IMR-90 (cell line): ENCODE measurements at regions of chr4 and their contacts with region 1.

Region 1: GRCh38 chr4:16289897-16290554 is 63.8 kb upstream of the TAPT1 start:
- DNase-seq: peak; percentile 46
- ATAC-seq: peak; percentile 85
- H3K4me3 ChIP-seq: no peak overlapping the region
- H3K27ac ChIP-seq: no peak overlapping the region
- H3K4me1 ChIP-seq: no peaks in the 10 kb centered on the region
- H3K27me3 ChIP-seq: peaks cover 10% of the 10 kb centered on the region
- CTCF ChIP-seq: peak; percentile 74
- POLR2A ChIP-seq: no peak
- RAD21 ChIP-seq: peak; percentile 74

Region 2: DNA sequence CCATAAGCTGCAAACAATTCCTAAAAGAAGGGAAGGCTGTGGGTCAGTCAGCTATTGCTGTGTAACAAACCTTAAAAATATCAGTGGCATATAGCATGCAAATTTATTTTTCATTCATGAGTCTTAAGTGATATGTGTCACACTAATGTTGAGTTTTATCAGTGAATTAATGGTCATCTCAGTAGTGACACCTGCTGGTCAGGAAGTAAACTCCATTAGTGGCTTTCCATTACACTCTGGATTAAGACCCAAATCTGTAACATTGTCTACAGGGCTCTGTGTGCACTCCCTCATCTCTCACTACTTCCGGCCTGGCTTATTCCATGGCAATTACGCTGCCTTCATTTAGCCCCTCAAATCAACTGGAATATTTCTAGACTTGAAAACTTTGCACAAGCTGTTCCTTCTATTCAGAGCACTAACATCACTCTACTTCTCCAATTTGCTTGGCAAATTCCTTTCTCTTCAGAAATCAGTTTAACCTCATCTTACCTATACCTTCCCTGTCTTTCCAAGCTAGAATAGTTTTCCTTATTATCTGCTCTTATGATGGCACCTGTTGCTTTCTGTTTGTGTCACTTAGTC is 153.6 kb after region 1 on chr4:
- CTCF ChIA-PET with region 1: interaction called, 3 read pairs
- POLR2A ChIA-PET with region 1: no interaction called
- dilution Hi-C with region 1: no loop called
- in situ Hi-C with region 1: no loop called
- intact Hi-C with region 1: loop called (anchors 1 kb)
- DNase-seq: peak; percentile 52
- ATAC-seq: peak; percentile 88
- H3K4me3 ChIP-seq: no peak overlapping the region
- H3K27ac ChIP-seq: no peak overlapping the region
- H3K4me1 ChIP-seq: peaks cover under 1% of the 10 kb centered on the region; the same call in 1 of the 2 replicates
- H3K27me3 ChIP-seq: peaks cover 6% of the 10 kb centered on the region
- CTCF ChIP-seq: peak; percentile 63
- POLR2A ChIP-seq: no peak
- RAD21 ChIP-seq: peak; percentile 48

Region 3: DNA sequence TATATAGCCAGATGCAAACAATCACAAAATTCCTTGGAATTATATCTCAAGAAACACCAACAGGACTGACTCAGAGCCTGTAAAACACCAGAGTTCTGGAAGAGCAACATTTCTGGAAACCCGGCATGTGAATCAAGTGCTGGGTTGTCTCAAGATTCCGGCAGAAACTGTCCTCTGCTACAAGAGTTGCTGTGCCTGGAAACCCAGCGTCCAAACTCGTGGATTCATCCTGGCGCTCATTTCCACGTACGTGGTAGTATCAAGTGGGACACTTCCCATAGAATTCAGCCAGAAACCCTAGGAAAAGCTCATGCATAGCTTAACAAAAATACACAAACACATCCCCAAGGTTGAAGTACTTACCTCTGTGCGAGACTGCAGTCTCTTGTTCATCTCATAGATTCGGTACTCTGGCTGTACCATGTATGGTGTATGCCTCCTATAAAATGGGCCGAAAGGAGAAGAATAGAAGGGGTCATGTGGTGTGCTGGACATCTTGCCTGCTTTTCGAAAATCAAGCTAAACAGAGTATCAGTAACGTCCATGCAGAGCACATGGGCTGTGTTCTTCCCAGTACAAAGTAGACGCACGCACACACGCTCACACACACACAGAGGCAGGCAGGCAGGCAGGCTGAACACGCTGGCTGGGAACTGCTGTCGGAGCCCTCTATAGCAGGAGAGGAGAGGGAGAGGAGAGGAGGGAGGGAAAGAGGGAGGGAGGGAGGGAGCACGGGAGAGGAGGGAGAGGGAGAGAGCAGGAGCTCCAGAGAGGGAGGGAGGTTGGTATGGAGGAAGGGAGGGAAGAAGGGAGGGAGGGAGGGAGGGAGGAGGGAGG is 608.2 kb after region 1 on chr4 and contains the start of gene LDB2:
- CTCF ChIA-PET with region 1: no interaction called
- POLR2A ChIA-PET with region 1: no interaction called
- dilution Hi-C with region 1: no loop called
- in situ Hi-C with region 1: no loop called
- intact Hi-C with region 1: loop called (anchors 10 kb)
- DNase-seq: peak; percentile 88
- ATAC-seq: peak; percentile 81
- H3K4me3 ChIP-seq: peak within 1 kb of the TSS; percentile 88
- H3K27ac ChIP-seq: peak within 1 kb of the TSS; percentile 99
- H3K4me1 ChIP-seq: peaks cover 11% of the 10 kb centered on the region
- H3K27me3 ChIP-seq: no peaks in the 10 kb centered on the region
- CTCF ChIP-seq: no peak
- POLR2A ChIP-seq: no peak
- RAD21 ChIP-seq: no peak; the same call in 1 of the 2 replicates
- total RNA-seq, gene LDB2: 92.8 and 116 TPM in 2 replicates

Region 4: DNA sequence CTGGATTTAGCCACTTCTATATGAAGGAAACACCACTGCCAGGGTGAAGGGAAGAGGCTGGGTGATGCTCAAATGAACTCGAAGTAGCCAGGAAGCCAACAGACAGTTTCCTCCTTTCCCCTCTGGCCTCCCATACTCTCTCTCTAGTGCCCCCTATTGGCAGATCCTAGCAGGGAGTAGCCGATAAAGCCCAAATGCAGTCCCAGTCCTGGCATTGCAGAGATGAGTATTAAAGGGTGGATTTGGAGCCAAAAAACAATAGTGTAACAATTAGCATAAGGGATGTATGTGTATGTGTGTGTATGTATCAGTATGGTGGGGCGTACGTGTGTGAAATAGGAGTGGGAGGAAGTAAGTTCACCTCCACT is 822.2 kb after region 1 on chr4:
- CTCF ChIA-PET with region 1: no interaction called
- POLR2A ChIA-PET with region 1: no interaction called
- dilution Hi-C with region 1: no loop called
- in situ Hi-C with region 1: no loop called
- intact Hi-C with region 1: no loop called
- DNase-seq: no peak
- ATAC-seq: no peak
- H3K4me3 ChIP-seq: no peak overlapping the region
- H3K27ac ChIP-seq: no peak overlapping the region
- H3K4me1 ChIP-seq: no peaks in the 10 kb centered on the region
- H3K27me3 ChIP-seq: no peaks in the 10 kb centered on the region
- CTCF ChIP-seq: 0 out of 2 replicates have a peak, but pooled peaks have one; percentile 27
- POLR2A ChIP-seq: no peak
- RAD21 ChIP-seq: no peak

Region 5: DNA sequence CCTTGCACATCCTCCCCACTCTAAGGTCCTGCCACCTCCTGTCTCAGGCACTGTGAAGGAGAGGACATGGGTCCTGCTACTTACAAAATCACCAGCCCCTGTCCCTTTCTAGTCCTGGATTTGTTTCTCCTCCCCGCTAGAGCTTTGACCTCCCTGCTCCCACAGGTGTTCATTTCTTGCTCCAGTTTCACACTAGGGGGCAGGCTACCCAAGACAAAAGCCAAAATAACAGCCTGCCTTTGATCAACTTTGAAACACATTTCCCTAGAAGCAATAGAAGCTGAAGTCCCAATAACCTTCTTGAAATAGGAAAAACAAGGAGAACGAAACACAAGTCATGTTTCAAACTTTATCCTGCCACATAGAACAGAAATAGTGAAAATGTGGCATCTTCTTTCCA is 1057.4 kb after region 1 on chr4:
- CTCF ChIA-PET with region 1: no interaction called
- POLR2A ChIA-PET with region 1: no interaction called
- dilution Hi-C with region 1: no loop called
- in situ Hi-C with region 1: no loop called
- intact Hi-C with region 1: loop called (anchors 5 kb)
- DNase-seq: peak; percentile 19
- ATAC-seq: peak; percentile 53
- H3K4me3 ChIP-seq: no peak overlapping the region
- H3K27ac ChIP-seq: no peak overlapping the region
- H3K4me1 ChIP-seq: no peaks in the 10 kb centered on the region
- H3K27me3 ChIP-seq: peaks cover 2% of the 10 kb centered on the region; the same call in 1 of the 2 replicates
- CTCF ChIP-seq: peak; percentile 53
- POLR2A ChIP-seq: no peak
- RAD21 ChIP-seq: peak; percentile 53

Region 6: DNA sequence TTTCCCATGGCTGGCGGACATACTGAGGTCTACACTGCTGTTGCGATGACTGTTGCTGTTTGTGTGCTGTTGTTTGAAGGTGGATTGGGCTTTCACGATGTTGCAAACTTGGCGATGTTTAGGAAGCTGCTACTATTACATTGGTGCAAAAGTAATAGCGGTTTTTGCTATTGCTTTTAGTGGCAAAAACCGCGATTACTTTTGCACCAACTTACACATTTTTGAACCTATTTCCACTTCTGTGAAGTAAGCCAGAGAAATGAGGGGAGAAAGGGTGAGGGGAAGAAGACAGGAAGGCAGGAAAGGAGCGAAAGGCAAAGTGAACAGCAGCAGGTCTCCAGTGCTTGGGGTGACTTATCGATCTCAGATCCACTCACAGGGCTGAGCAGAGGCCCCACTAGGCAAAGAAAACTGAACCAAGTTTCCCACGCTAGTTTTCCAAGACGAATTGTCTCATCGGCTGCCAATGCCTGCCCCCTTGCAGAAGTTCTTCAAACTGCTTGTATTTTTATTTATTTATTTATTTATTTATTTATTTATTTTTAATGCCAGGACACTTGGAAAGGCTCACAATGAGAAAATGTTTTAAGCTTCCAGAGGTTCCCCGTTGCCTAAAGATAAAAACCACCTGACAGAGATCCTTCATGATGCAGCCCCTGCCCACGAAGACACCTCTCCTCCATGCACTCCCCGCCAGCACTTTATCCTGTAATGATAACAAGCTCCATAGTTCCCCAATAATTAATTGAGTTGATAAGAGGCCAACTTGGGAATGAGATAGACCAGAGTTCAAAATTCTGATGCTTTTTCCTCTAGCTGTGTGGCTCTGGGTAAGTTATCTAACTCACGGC is 1178.6 kb after region 1 on chr4:
- CTCF ChIA-PET with region 1: interaction called, 5 read pairs
- POLR2A ChIA-PET with region 1: no interaction called
- dilution Hi-C with region 1: no loop called
- in situ Hi-C with region 1: loop called (anchors 5 kb)
- intact Hi-C with region 1: loop called (anchors 2 kb)
- DNase-seq: peak; percentile 44
- ATAC-seq: no peak
- H3K4me3 ChIP-seq: no peak overlapping the region
- H3K27ac ChIP-seq: no peak overlapping the region
- H3K4me1 ChIP-seq: peaks cover 2% of the 10 kb centered on the region; the same call in 1 of the 2 replicates
- H3K27me3 ChIP-seq: peaks cover 2% of the 10 kb centered on the region; the same call in 1 of the 2 replicates
- CTCF ChIP-seq: peak; percentile 46; the same call in 1 of the 2 replicates
- POLR2A ChIP-seq: no peak
- RAD21 ChIP-seq: peak; percentile 48